Activated CD4-positive, alpha-beta memory T cell treated with anti-CD3 and anti-CD28 coated beads, Interleukin-2, amount 10 ng/mL, durations not matched to agents 7 days and 5 days (primary cell): ENCODE measurements at regions of chr1 and their contacts with region 1.

Region 1: DNA sequence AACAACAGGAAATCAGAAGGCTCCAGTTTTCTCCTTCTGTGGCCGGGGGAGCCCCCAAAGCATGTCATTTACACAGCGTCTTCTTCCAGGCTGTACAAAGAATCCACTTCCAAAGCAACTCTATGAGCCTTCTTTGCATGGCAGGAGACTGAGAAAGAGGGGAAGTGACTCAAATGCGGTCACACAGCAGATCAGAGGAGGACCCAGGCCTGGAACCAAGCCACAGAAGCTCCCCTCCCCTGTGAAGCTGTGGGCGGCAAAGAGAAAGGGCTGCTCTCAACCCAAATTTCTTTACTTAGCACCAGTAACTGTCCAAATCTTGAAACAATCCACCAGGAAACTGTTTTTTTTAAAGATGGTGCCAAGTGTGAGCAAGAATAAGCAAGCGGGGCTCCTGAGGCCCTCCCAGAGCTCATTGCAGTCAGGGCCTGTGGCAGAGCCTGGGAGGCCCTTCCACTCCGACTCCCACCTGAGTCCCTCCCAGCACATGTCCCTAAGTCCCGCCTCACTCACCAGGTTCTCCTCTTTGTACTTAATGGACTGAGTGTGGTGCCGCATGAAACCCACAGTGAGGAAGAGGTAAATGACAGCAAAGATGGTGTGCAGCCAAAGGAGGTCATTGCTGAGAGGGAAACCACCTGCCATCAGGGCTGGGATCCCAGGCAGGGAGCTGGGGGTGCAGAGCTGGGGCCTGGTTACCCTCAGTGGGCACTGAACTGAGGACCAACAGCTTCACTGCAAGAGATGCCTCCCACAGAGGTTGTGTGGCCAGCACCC is 15.9 kb downstream of the TMEM63A start:
- DNase-seq: peak; percentile 77
- H3K4me3 Mint-ChIP-seq: no peak overlapping the region
- H3K27ac Mint-ChIP-seq: peak overlapping the region; percentile 50
- H3K4me1 Mint-ChIP-seq: peaks cover 39% of the 10 kb centered on the region
- H3K27me3 Mint-ChIP-seq: no peaks in the 10 kb centered on the region

Region 2: GRCh38 chr1:225710804-225711203 is 155.4 kb before region 1 on chr1:
- CTCF ChIA-PET with region 1: no interaction called
- POLR2A ChIA-PET with region 1: no interaction called
- DNase-seq: no peak
- H3K4me3 Mint-ChIP-seq: no peak overlapping the region
- H3K27ac Mint-ChIP-seq: no peak overlapping the region
- H3K4me1 Mint-ChIP-seq: no peaks in the 10 kb centered on the region
- H3K27me3 Mint-ChIP-seq: no peaks in the 10 kb centered on the region

Region 3: DNA sequence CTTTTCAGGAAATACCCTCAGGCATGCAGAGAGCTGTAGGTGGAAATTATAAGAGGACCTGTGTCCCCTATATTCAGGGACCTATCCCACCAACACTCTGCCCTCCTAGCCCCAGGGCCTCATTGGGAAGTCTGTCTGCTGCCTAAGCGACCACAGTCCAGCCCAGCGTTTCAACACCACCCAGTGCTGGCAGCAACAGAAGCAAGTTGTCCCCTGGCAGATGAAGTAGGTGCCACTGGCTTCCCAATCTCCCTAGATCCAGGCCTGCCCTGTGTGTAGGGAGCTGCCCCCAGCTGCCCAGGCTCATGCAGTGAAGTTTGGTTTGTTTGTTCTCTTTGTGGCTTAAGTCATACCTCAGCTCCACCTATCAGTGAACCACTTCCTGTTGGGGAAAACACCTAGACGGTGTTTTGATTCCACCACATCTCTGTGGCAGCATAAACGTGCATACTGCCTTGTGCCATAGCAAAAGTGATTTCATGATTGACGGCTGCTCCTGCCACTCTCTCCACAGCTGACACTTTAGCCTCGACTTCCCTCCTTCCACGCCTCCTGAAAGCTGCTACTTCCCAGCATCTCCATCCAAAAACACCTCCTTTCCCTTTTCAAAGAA is 30.8 kb after region 1 on chr1:
- CTCF ChIA-PET with region 1: interaction called, 4 read pairs
- POLR2A ChIA-PET with region 1: interaction called, 14 read pairs
- DNase-seq: peak; percentile 83
- H3K4me3 Mint-ChIP-seq: peak overlapping the region; percentile 12
- H3K27ac Mint-ChIP-seq: peak overlapping the region; percentile 64
- H3K4me1 Mint-ChIP-seq: peaks cover 36% of the 10 kb centered on the region
- H3K27me3 Mint-ChIP-seq: peaks cover 21% of the 10 kb centered on the region